Activated CD4-positive, alpha-beta memory T cell treated with anti-CD3 and anti-CD28 coated beads for 36 hours (primary cell): ENCODE measurements at regions of chr19 and their contacts with region 1.

Region 1: DNA sequence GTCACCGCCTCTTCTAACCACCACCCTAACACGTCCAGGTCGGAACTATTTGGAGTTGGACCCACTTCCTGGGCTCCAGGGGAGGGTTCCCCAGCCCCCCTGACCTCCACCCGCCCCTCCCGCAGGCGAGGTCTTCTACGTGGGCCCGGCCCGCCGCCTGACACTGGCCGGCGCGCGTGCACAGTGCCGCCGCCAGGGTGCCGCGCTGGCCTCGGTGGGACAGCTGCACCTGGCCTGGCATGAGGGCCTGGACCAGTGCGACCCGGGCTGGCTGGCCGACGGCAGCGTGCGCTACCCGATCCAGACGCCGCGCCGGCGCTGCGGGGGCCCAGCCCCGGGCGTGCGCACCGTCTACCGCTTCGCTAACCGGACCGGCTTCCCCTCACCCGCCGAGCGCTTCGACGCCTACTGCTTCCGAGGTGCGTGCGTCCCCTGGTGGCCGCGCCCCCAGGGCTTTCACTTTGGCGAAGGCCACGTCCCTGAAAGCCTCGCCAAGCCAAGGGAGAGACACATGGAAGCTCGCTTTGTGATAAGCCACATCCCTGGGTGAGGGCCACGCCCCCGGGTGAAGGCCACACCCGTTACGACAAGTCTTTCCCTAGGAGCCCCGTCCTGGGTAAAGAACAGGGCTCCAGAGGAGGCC is 13.2 kb downstream of the NCAN start:
- DNase-seq: peak; percentile 83
- H3K4me3 Mint-ChIP-seq: peak overlapping the region; percentile 62
- H3K27ac Mint-ChIP-seq: no peak overlapping the region
- H3K4me1 Mint-ChIP-seq: no peaks in the 10 kb centered on the region
- H3K27me3 Mint-ChIP-seq: peaks cover 13% of the 10 kb centered on the region

Region 2: DNA sequence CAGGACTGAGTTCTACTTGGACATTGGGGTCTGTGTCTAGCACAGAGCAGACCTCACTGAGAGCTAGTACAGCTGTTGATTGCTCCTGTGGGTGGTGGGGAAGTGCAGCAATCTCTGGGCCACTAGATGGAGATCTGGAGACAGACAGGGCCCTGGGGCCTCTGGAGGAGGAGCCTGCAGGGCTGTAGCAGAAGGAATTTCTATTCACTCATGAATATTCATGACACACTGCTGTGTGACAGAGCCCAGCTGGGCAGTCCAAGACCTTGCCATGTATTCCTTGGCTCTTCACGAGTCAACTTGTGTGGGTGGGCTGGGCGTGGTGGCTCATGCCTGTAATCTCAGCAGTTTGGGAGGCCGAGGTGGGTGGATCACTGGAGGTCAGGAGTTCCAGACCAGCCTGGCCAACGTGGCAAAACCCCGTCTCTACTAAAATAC is 229.2 kb before region 1 on chr19:
- CTCF ChIA-PET with region 1: no interaction called
- POLR2A ChIA-PET with region 1: no interaction called
- intact Hi-C with region 1: no loop called
- DNase-seq: peak; percentile 27
- H3K4me3 Mint-ChIP-seq: no peak overlapping the region
- H3K27ac Mint-ChIP-seq: no peak overlapping the region
- H3K4me1 Mint-ChIP-seq: peaks cover 16% of the 10 kb centered on the region
- H3K27me3 Mint-ChIP-seq: no peaks in the 10 kb centered on the region

Region 3: GRCh38 chr19:19185853-19186740 is 38.9 kb before region 1 on chr19:
- CTCF ChIA-PET with region 1: interaction called, 10 read pairs
- POLR2A ChIA-PET with region 1: no interaction called
- intact Hi-C with region 1: loop called (anchors 1 kb)
- DNase-seq: peak; percentile 70
- H3K4me3 Mint-ChIP-seq: no peak overlapping the region
- H3K27ac Mint-ChIP-seq: no peak overlapping the region
- H3K4me1 Mint-ChIP-seq: peaks cover 30% of the 10 kb centered on the region
- H3K27me3 Mint-ChIP-seq: no peaks in the 10 kb centered on the region

Region 4: DNA sequence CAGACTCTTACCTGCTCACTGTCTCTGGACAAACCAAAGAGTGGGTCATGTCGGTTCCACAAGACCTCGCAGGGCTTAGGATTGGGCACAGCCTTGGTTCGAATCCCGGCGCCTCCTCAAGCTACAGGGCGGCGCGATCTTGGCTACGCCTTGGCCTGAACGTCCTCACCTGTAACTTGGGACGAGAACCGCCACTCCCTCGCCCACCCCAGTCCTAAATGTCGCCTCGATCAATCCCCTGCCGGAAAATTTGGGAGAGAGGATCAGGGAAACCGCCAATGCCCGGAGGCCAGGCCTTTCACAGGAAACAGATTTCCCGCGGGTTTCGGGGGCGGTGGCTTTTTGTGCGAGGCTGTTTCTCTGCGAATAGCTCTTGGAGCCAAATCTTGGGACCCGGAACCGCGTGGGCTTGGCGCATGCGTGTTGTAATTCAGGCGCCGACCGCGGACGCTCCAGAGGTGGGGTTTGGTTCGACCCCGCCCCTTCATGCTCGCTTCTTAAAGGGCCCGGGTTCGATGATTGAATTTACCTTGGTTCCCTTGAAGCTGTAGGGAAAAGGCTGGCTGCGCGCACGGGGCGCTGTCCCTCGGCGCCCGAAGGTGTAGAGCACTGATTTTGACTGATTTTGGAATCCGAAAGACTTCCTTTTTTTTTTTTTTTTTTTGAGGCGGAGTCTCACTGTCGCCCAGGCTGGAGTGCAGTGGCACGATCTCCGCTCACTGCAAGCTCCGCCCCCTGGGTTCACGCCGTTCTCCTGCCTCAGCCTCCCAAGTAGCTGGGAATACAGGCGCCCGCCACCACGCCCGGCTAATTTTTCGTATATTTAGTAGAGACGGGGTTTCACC is 21.7 kb before region 1 on chr19 and contains the start of gene NR2C2AP:
- CTCF ChIA-PET with region 1: interaction called, 11 read pairs
- POLR2A ChIA-PET with region 1: interaction called, 3 read pairs
- intact Hi-C with region 1: no loop called
- DNase-seq: peak; percentile 96
- H3K4me3 Mint-ChIP-seq: peak within 1 kb of the TSS; percentile 94
- H3K27ac Mint-ChIP-seq: peak within 1 kb of the TSS; percentile 93
- H3K4me1 Mint-ChIP-seq: peaks cover 31% of the 10 kb centered on the region
- H3K27me3 Mint-ChIP-seq: no peaks in the 10 kb centered on the region
- total RNA-seq, gene NR2C2AP: 39.2 to 42.9 TPM